Activated CD4-positive, alpha-beta memory T cell treated with anti-CD3 and anti-CD28 coated beads for 36 hours (primary cell): ENCODE measurements at regions of chr9 and their contacts with region 1.

Region 1: DNA sequence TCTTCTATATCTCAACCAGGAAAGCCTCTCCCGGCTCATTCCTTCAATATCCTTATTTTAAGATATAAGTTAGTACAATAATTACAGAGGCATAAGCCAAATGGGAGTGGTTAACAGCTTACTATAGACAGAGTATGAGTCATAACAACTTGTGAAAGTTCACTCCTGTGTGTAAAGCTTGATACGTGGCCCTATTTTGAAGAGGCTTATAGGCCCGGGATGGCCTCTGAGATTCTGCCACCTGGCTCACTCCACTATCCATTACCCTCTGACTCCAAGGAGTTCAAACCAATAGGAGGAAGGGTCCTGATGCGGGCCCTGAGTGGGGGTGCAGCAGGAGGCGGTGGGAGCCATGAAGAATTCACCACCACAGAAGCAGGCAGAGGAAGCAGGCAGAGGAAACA is 36.6 kb downstream of the B4GALT1 start:
- DNase-seq: peak; percentile 51
- H3K4me3 Mint-ChIP-seq: no peak overlapping the region
- H3K27ac Mint-ChIP-seq: peak overlapping the region; percentile 86
- H3K4me1 Mint-ChIP-seq: peaks cover 50% of the 10 kb centered on the region
- H3K27me3 Mint-ChIP-seq: no peaks in the 10 kb centered on the region

Region 2: GRCh38 chr9:32940740-32941139 is 189.8 kb before region 1 on chr9:
- CTCF ChIA-PET with region 1: no interaction called
- POLR2A ChIA-PET with region 1: no interaction called
- intact Hi-C with region 1: no loop called
- DNase-seq: no peak
- H3K4me3 Mint-ChIP-seq: no peak overlapping the region
- H3K27ac Mint-ChIP-seq: no peak overlapping the region
- H3K4me1 Mint-ChIP-seq: no peaks in the 10 kb centered on the region
- H3K27me3 Mint-ChIP-seq: no peaks in the 10 kb centered on the region

Region 3: GRCh38 chr9:33159760-33160127 is 29.2 kb after region 1 on chr9:
- CTCF ChIA-PET with region 1: no interaction called
- POLR2A ChIA-PET with region 1: interaction called, 4 read pairs
- intact Hi-C with region 1: loop called (anchors 1 kb)
- DNase-seq: peak; percentile 85
- H3K4me3 Mint-ChIP-seq: peak overlapping the region; percentile 66
- H3K27ac Mint-ChIP-seq: peak overlapping the region; percentile 97
- H3K4me1 Mint-ChIP-seq: peaks cover 94% of the 10 kb centered on the region
- H3K27me3 Mint-ChIP-seq: no peaks in the 10 kb centered on the region